A549 (cell line): ENCODE measurements at regions of chr1 and their contacts with region 1.

Region 1: GRCh38 chr1:108828022-108828961 is 28.6 kb downstream of the AKNAD1 start:
- DNase-seq: peak; percentile 68 to 71
- ATAC-seq: peak; percentile 60 to 84
- H3K4me3 ChIP-seq: no peak overlapping the region
- H3K27ac ChIP-seq: peak overlapping the region; percentile 74 to 85; a peak in 5 of 6 replicates
- H3K4me1 ChIP-seq: peaks cover 35% of the 10 kb centered on the region
- CTCF ChIP-seq: peak; percentile 73
- EP300 ChIP-seq: no peak
- POLR2A ChIP-seq: no peak
- RAD21 ChIP-seq: peak; percentile 69 to 70

Region 2: GRCh38 chr1:108816049-108816893 is 12.0 kb before region 1 on chr1:
- CTCF ChIA-PET with region 1: interaction called, 12 read pairs
- POLR2A ChIA-PET with region 1: no interaction called
- DNase-seq: peak in 1 of 2 experiments; percentile 44
- ATAC-seq: peak; percentile 84 to 87; a peak in 5 of 6 replicates
- H3K4me3 ChIP-seq: no peak overlapping the region
- H3K27ac ChIP-seq: peak overlapping the region; percentile 26 to 53; a peak in 2 of 6 replicates
- H3K4me1 ChIP-seq: peaks cover 16% of the 10 kb centered on the region; the same call in 2 of the 3 replicates
- CTCF ChIP-seq: no peak
- EP300 ChIP-seq: no peak
- POLR2A ChIP-seq: no peak
- RAD21 ChIP-seq: no peak

Region 3: DNA sequence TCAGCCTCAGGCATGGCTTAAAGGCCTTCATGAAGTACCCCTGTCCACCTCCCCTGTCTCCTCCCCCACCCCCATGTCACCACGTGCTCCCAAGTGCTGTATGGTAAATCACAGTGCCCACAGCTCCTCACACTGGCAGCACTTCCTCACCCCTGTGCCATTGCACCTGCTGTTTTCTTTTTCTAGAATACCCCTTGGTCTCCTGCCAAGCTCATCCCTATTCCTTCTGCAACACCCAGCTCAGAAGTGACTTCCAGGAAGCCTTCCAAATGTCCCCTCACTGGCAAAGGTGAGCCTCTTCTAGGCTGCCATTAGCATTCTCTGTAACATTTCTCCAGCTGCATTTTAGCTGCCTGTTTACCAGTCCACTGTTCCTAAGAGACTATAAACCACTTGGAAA is 19.2 kb after region 1 on chr1:
- CTCF ChIA-PET with region 1: interaction called, 20 read pairs
- POLR2A ChIA-PET with region 1: no interaction called
- DNase-seq: no peak
- ATAC-seq: no peak
- H3K4me3 ChIP-seq: no peak overlapping the region
- H3K27ac ChIP-seq: no peak overlapping the region
- H3K4me1 ChIP-seq: no peaks in the 10 kb centered on the region
- CTCF ChIP-seq: no peak
- EP300 ChIP-seq: no peak
- POLR2A ChIP-seq: no peak
- RAD21 ChIP-seq: no peak

Region 4: DNA sequence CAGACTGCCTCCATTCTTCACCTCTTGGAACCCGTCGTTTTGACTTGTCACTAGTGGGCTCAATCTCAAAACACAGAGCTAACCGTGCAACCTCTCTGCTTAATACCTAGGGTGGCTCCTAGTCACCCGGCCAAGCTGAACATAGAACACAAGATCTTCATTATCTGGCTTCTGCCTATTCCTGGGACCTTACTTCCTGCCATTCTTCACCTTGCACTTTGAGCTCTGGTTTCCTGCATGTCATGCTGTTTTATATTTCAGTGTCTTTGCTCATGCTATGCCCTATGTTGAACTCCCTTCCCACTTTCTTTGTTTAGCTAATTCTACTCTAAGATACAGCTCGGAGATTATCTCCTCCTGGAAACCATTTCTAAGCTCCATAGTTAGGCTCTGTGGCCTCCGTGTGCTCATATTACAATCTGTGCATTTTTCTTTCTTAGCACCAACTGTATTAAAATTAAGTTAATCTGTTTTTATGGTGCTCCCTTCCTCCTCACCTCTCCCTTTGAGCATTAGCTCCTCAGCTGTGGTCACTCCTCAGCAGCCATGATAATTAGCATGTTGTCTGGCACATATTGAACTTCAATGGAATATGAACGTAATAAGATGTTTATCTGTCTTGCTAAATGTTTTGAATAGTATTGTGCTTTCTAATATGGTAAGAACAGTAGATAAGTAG is 61.6 kb after region 1 on chr1:
- CTCF ChIA-PET with region 1: interaction called, 265 read pairs
- POLR2A ChIA-PET with region 1: no interaction called
- DNase-seq: no peak
- ATAC-seq: no peak
- H3K4me3 ChIP-seq: no peak overlapping the region
- H3K27ac ChIP-seq: no peak overlapping the region
- H3K4me1 ChIP-seq: peaks cover 16% of the 10 kb centered on the region
- CTCF ChIP-seq: no peak
- EP300 ChIP-seq: no peak
- POLR2A ChIP-seq: no peak
- RAD21 ChIP-seq: no peak

Region 5: GRCh38 chr1:108897865-108898720 is 69.8 kb after region 1 on chr1:
- CTCF ChIA-PET with region 1: interaction called, 265 read pairs
- POLR2A ChIA-PET with region 1: no interaction called
- DNase-seq: peak; percentile 28 to 55
- ATAC-seq: peak; percentile 62 to 77; a peak in 3 of 6 replicates
- H3K4me3 ChIP-seq: no peak overlapping the region
- H3K27ac ChIP-seq: no peak overlapping the region
- H3K4me1 ChIP-seq: peaks cover 2% of the 10 kb centered on the region; the same call in 2 of the 3 replicates
- CTCF ChIP-seq: peak; percentile 75
- EP300 ChIP-seq: no peak
- POLR2A ChIP-seq: no peak
- RAD21 ChIP-seq: peak; percentile 78 to 82